Ascending aorta (tissue), 2 donors: ENCODE measurements at regions of chr2 and their contacts with region 1.

Region 1: DNA sequence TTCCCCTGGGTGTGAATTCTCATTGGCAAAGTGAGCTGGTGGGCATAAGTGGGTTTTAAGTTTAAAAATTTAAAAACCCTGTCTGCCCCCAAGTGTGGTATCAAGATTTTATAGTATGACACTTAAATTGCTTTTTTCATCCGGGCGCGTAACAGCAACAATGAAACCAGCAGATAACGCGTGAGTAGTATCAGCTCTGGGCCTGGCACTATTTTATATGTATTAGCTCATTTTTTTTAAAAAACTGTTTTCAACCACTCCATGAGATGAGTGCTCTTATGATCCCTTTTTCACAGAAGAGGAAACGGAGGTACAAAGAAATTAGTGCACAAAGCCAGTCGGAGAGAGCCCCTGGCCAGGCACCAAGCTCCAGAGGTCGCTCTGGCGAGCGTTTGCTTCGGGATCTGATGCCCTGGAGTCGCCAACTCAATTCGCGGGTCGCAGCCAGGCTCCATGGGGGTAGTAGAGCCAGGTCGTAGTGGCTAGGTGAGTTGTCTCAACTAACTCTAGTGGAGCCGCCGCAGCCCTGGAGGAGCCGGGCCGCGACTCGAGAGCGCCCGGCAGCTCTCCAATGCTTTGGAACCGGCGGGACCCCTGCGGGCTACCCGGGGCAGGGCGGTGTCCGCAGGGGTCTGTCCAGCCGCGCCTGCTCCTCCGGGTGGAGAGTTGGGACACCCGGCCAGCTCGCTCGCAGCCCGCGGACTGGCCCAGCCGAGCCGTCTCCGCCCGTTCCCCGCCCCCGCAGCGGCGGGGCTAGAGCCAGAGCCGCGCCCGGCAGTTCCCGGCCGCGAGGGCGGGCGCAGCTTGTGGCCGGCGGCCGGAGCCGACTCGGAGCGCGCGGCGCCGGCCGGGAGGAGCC is at the start of gene IL1R1:
- DNase-seq: peak in 1 of 2 donors; percentile 88
- H3K4me3 ChIP-seq: peak within 1 kb of the TSS; percentile 64 to 77
- H3K27ac ChIP-seq: peak within 1 kb of the TSS; percentile 93 to 96
- H3K4me1 ChIP-seq: peaks cover 0 to 5% of the 10 kb centered on the region in 2 donors
- H3K27me3 ChIP-seq: no peaks in the 10 kb centered on the region
- CTCF ChIP-seq: no peak
- total RNA-seq, gene IL1R1: 132 TPM

Region 2: DNA sequence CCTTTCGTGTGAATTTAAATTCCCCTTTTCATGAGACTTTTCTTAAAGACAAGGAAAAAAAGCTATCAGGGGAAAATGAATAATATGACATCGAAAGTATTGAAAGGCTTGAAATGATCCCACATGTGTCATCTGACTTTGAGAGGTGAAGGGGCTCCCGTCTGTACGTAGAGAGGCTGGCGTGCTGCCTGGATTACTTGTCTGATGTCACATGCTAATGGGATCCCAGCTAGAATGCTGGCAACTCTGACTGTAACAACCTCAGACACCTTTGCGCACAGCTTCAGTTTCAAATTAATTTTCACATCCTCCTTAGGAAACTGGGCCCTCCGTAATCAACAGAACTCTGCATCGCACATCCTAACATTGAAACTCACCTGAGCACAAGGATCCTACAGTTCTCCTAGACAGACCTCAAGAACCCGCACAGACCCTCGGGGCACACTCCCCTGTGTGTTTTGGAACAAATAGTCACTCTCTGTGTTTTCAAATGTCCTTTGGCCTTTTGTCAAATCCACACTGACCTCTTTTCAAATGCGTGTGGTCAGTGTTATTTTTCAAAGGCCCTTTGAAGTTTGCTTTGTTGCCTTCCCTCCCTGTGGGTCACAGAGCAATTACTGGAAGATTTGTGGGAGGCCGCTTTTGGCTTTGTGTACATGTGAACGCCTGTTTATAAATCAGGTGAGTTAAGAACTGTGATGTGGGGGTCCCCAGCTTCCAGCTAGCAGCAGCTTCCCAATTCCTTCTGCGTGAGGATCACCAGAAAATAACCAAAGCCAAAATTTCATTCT is 84.5 kb before region 1 on chr2:
- intact Hi-C with region 1: no loop called
- DNase-seq: no peak
- H3K4me3 ChIP-seq: no peak overlapping the region
- H3K27ac ChIP-seq: peak overlapping the region in 1 of 2 donors; percentile 35
- H3K4me1 ChIP-seq: peaks cover 7 to 10% of the 10 kb centered on the region in 2 donors
- H3K27me3 ChIP-seq: no peaks in the 10 kb centered on the region
- CTCF ChIP-seq: no peak

Region 3: DNA sequence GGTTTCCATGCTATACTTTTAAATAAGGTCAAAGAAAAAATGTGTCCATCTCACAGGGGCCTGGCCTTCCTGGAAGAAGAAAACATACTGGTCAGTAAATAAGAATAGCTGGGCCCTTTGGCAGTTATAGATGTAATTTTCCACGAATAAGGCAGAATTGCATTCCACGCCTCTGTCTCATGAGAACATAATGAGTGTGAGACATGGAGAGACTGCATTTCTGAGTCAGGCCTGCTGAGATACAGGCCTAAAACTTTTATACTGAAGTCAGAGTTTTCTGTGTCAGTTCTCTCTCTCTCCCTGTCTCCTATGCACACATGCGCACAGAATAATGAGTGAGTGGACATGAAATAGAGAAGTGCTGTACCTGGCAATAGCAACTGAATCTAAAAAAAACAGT is 20.1 kb before region 1 on chr2:
- intact Hi-C with region 1: loop called (anchors 1 kb)
- DNase-seq: peak in 1 of 2 donors; percentile 74
- H3K4me3 ChIP-seq: no peak overlapping the region
- H3K27ac ChIP-seq: peak overlapping the region; percentile 74 to 75
- H3K4me1 ChIP-seq: peaks cover 0 to 18% of the 10 kb centered on the region in 2 donors
- H3K27me3 ChIP-seq: no peaks in the 10 kb centered on the region
- CTCF ChIP-seq: no peak